Activated T-helper 1 cell treated with anti-CD3 and anti-CD28 coated beads, Interleukin-12 subunit alpha, Interleukin-12 subunit beta, Interleukin-2, Interleukin-4 antibody, amounts not matched to agents 30 ng/mL and 10 ng/mL and 1 ng/mL, durations not matched to agents 14 hours and 24 hours and 36 hours (primary cell): ENCODE measurements at regions of chr10 and their contacts with region 1.

Region 1: DNA sequence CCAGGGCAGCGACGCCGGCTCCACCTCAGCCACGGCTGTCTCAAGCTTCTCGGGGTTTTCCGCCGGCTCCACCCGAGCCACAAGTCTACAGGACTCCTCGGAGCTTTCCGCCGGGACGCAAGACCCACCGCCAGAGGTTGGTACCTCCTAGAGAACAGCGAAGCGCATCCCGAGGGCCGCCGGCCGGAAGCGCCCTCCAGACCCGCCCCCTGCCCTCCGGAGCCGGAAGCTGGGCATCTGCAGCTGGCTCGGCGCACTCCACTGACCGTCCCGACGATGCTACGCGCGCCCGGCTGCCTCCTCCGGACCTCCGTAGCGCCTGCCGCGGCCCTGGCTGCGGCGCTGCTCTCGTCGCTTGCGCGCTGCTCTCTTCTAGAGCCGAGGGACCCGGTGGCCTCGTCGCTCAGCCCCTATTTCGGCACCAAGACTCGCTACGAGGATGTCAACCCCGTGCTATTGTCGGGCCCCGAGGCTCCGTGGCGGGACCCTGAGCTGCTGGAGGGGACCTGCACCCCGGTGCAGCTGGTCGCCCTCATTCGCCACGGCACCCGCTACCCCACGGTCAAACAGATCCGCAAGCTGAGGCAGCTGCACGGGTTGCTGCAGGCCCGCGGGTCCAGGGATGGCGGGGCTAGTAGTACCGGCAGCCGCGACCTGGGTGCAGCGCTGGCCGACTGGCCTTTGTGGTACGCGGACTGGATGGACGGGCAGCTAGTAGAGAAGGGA is at the start of gene MINPP1:
- DNase-seq: peak; percentile 68
- H3K4me3 Mint-ChIP-seq: peak within 1 kb of the TSS; percentile 90
- H3K27ac Mint-ChIP-seq: peak within 1 kb of the TSS; percentile 86
- H3K4me1 Mint-ChIP-seq: peaks cover 41% of the 10 kb centered on the region
- H3K27me3 Mint-ChIP-seq: peaks cover 14% of the 10 kb centered on the region
- total RNA-seq, gene MINPP1: 12.3 and 13.8 TPM in 2 replicates

Region 2: GRCh38 chr10:86755740-86756510 is 748.9 kb before region 1 on chr10:
- intact Hi-C with region 1: loop called (anchors 10 kb)
- DNase-seq: peak; percentile 86
- H3K4me3 Mint-ChIP-seq: peak overlapping the region; percentile 86
- H3K27ac Mint-ChIP-seq: peak overlapping the region; percentile 86
- H3K4me1 Mint-ChIP-seq: peaks cover 52% of the 10 kb centered on the region
- H3K27me3 Mint-ChIP-seq: peaks cover 38% of the 10 kb centered on the region

Region 3: DNA sequence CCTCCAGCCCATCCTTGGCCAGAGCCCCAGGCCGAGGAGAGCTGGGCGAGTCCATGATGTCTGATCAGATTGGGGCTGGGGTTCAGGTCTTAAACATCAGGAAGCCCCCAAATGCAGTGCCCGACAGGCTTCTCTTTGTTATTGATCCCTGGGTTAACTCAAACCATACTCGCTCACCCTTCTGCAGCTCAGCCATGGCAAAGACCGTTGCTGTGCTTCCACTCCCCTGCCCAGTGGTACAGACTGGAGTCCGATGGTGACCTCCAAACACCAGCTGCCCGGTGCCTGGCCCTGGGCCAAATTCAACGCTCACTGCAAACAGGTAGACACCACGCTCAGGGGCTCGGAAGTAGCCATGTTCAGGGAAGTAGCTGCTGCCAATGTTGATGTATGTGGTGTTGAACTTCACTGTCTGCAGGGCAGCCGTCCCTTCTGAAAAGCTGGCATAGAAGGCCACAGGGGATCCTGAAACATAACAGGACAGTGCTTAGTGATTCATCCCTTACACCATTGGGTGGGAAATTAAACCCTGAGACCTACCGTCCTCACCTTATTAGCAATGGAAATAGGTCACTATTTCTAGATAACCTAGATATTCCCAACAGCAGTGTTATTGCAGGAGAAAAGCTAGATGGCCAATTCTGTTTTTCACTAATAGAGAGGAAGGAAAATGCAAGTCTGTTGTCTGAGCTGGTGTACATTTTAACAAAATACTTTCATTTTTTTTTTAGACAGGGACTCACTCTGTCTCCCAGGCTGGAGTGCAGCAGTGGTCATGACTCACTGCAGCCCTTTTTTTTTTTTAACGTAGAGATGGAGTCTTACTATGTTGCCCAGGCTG is 567.9 kb before region 1 on chr10:
- intact Hi-C with region 1: loop called (anchors 1 kb)
- DNase-seq: no peak
- H3K4me3 Mint-ChIP-seq: no peak overlapping the region
- H3K27ac Mint-ChIP-seq: no peak overlapping the region
- H3K4me1 Mint-ChIP-seq: no peaks in the 10 kb centered on the region
- H3K27me3 Mint-ChIP-seq: peaks cover 3% of the 10 kb centered on the region

Region 4: GRCh38 chr10:86960003-86960862 is 544.6 kb before region 1 on chr10:
- intact Hi-C with region 1: no loop called
- DNase-seq: peak; percentile 14
- H3K4me3 Mint-ChIP-seq: no peak overlapping the region
- H3K27ac Mint-ChIP-seq: no peak overlapping the region
- H3K4me1 Mint-ChIP-seq: no peaks in the 10 kb centered on the region
- H3K27me3 Mint-ChIP-seq: no peaks in the 10 kb centered on the region

Region 5: GRCh38 chr10:87531908-87532622 is 27.3 kb after region 1 on chr10:
- intact Hi-C with region 1: loop called (anchors 2 kb)
- DNase-seq: no peak
- H3K4me3 Mint-ChIP-seq: no peak overlapping the region
- H3K27ac Mint-ChIP-seq: no peak overlapping the region
- H3K4me1 Mint-ChIP-seq: peaks cover under 1% of the 10 kb centered on the region
- H3K27me3 Mint-ChIP-seq: no peaks in the 10 kb centered on the region

Region 6: GRCh38 chr10:87550741-87551140 is 45.9 kb after region 1 on chr10:
- intact Hi-C with region 1: loop called (anchors 1 kb)
- DNase-seq: no peak
- H3K4me3 Mint-ChIP-seq: no peak overlapping the region
- H3K27ac Mint-ChIP-seq: no peak overlapping the region
- H3K4me1 Mint-ChIP-seq: peaks cover 7% of the 10 kb centered on the region
- H3K27me3 Mint-ChIP-seq: peaks cover 6% of the 10 kb centered on the region

Region 7: DNA sequence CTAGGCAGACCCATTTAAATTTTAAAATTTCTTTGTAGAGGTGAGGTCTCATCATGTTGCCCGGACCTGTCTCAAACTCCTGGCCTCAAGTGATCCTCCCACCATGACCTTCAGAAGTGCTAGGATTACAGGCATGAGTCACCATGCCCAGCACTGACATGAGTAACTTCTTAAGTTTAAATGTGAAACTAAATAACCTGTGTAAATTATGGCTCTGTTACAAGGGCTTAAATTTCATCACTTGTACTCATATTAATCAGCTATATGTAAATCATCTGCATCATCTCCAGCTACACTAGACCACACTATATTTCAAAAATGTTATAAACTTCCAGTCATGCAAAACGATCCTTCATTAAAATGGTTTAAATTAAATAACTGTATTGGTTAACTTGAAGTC is 257.1 kb after region 1 on chr10:
- intact Hi-C with region 1: loop called (anchors 1 kb)
- DNase-seq: peak; percentile 11
- H3K4me3 Mint-ChIP-seq: peak overlapping the region; percentile 28
- H3K27ac Mint-ChIP-seq: peak overlapping the region; percentile 56
- H3K4me1 Mint-ChIP-seq: peaks cover 16% of the 10 kb centered on the region
- H3K27me3 Mint-ChIP-seq: no peaks in the 10 kb centered on the region

Region 8: GRCh38 chr10:87817609-87818504 is 313.1 kb after region 1 on chr10 and contains the start of gene ATAD1:
- intact Hi-C with region 1: loop called (anchors 1 kb)
- DNase-seq: peak; percentile 88
- H3K4me3 Mint-ChIP-seq: peak within 1 kb of the TSS; percentile 93
- H3K27ac Mint-ChIP-seq: peak within 1 kb of the TSS; percentile 98
- H3K4me1 Mint-ChIP-seq: peaks cover 40% of the 10 kb centered on the region
- H3K27me3 Mint-ChIP-seq: peaks cover 4% of the 10 kb centered on the region
- total RNA-seq, gene ATAD1: 50.1 and 53.0 TPM in 2 replicates